ENCODE measurements at regions of chr12 and their contacts with region 1.

Region 1: GRCh38 chr12:31874961-31875608 is 84.1 kb upstream of the RESF1 start:
- DNase-seq: peak; percentile 83
- ATAC-seq: peak; percentile 48; the same call in 1 of the 2 replicates
- H3K4me3 ChIP-seq: no peak overlapping the region
- H3K27ac ChIP-seq: no peak overlapping the region
- H3K4me1 ChIP-seq: no peaks in the 10 kb centered on the region; the same call in 1 of the 2 replicates
- H3K27me3 ChIP-seq: no peaks in the 10 kb centered on the region; the same call in 1 of the 2 replicates
- CTCF ChIP-seq: no peak
- POLR2A ChIP-seq: no peak
- RAD21 ChIP-seq: no peak

Region 2: GRCh38 chr12:31944299-31944698 is 69.2 kb after region 1 on chr12:
- CTCF ChIA-PET with region 1: no interaction called
- POLR2A ChIA-PET with region 1: no interaction called
- dilution Hi-C with region 1: no loop called
- in situ Hi-C with region 1: no loop called
- intact Hi-C with region 1: loop called (anchors 10 kb)
- DNase-seq: peak; percentile 6
- ATAC-seq: no peak
- H3K4me3 ChIP-seq: no peak overlapping the region
- H3K27ac ChIP-seq: no peak overlapping the region
- H3K4me1 ChIP-seq: no peaks in the 10 kb centered on the region
- H3K27me3 ChIP-seq: no peaks in the 10 kb centered on the region
- CTCF ChIP-seq: no peak
- POLR2A ChIP-seq: no peak
- RAD21 ChIP-seq: no peak

Measured in IMR-90 (cell line).